Activated naive CD4-positive, alpha-beta T cell treated with anti-CD3 and anti-CD28 coated beads for 36 hours (primary cell): ENCODE measurements at regions of chr20 and their contacts with region 1.

Region 1: GRCh38 chr20:50120897-50121693 is 8.1 kb upstream of the UBE2V1 start:
- DNase-seq: peak; percentile 73
- H3K4me3 Mint-ChIP-seq: no peak overlapping the region
- H3K27ac Mint-ChIP-seq: no peak overlapping the region
- H3K4me1 Mint-ChIP-seq: peaks cover 8% of the 10 kb centered on the region
- H3K27me3 Mint-ChIP-seq: no peaks in the 10 kb centered on the region

Region 2: GRCh38 chr20:49186535-49187329 is 934.4 kb before region 1 on chr20:
- CTCF ChIA-PET with region 1: no interaction called
- intact Hi-C with region 1: no loop called
- DNase-seq: peak; percentile 84
- H3K4me3 Mint-ChIP-seq: peak overlapping the region; percentile 82
- H3K27ac Mint-ChIP-seq: peak overlapping the region; percentile 90
- H3K4me1 Mint-ChIP-seq: peaks cover 49% of the 10 kb centered on the region
- H3K27me3 Mint-ChIP-seq: no peaks in the 10 kb centered on the region

Region 3: DNA sequence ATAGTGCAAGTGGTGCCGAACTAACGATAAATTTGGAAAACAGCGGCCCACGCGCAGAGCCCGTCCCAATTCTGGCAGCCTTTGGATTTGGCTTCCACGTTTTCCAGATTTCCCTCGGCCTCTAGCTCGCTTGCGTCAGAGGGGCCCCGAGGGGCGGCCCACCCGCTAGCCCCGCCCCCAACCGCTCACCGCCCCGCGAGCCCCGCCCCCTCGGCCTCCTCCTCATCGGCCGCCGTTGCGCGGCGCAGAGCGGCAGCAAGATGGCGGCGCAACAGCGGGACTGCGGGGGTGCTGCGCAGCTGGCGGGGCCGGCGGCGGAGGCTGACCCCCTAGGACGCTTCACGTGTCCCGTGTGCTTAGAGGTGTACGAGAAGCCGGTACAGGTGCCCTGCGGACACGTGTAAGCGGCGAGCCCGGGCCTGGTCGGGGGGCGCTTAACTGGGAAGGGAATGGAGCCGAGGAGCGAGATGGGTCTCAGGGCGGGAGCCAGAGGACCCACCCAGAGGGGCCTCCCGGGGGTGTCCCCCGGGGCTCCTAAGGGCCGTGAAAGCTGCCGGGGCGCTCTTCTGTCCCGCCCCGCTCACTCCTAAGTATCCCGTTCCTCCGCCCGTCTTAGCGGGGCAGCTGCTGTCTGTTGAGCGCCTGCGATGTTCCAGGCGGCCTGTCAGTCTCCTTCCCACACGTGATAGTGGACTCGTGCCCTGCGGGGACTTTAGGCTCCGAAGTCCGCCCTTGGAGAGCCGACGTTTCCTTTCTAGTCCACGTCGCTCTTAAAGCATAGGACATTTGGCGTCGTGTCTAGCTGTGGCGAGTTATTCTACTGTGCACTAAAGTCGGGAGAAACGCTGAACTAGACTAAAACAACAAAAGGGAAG is 184.7 kb before region 1 on chr20 and contains the start of gene RNF114:
- CTCF ChIA-PET with region 1: no interaction called
- intact Hi-C with region 1: no loop called
- DNase-seq: peak; percentile 93
- H3K4me3 Mint-ChIP-seq: peak within 1 kb of the TSS; percentile 96
- H3K27ac Mint-ChIP-seq: peak within 1 kb of the TSS; percentile 83
- H3K4me1 Mint-ChIP-seq: peaks cover 46% of the 10 kb centered on the region
- H3K27me3 Mint-ChIP-seq: no peaks in the 10 kb centered on the region
- total RNA-seq, gene RNF114: 72.3 to 76.5 TPM

Region 4: GRCh38 chr20:50058747-50059404 is 62.2 kb before region 1 on chr20:
- CTCF ChIA-PET with region 1: no interaction called
- intact Hi-C with region 1: no loop called
- DNase-seq: no peak
- H3K4me3 Mint-ChIP-seq: no peak overlapping the region
- H3K27ac Mint-ChIP-seq: no peak overlapping the region
- H3K4me1 Mint-ChIP-seq: no peaks in the 10 kb centered on the region
- H3K27me3 Mint-ChIP-seq: peaks cover under 1% of the 10 kb centered on the region

Region 5: DNA sequence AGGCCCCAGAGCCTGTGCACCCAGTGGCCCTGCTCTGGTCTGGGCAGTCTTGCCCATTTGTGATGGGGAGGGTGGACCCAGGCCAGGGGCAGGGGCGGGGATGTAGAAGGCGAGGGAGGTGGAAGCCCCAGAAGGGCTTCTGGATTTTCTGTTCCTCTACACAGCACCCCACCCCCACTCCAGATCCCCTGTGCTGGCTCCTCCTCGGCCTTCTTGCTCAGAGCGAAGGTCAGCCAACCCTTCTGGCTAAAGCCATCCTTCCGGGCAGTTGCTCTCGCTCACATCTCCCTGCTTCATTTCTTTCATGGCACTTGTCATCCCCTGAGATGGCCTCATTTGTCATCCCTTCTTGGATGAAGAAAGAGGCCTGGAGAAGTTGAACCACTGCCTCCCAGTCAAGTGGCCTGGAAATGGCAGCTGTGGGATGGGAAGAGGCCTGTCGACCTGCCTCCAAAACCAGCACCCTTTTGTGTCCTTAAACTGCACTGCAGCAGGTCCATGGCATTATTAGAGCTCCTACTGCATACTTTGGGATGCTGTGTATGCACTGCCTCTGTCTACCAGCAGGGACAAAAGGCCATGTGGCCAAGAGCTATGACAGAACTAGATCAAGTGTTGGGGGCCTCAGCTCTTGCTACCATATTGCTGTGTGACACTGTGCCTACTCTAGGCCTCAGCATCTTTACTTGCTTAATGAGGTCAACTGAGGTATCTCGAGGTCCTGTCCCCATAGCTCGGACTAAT is 12.6 kb after region 1 on chr20:
- CTCF ChIA-PET with region 1: interaction called, 12 read pairs
- intact Hi-C with region 1: no loop called
- DNase-seq: no peak
- H3K4me3 Mint-ChIP-seq: no peak overlapping the region
- H3K27ac Mint-ChIP-seq: no peak overlapping the region
- H3K4me1 Mint-ChIP-seq: peaks cover 15% of the 10 kb centered on the region
- H3K27me3 Mint-ChIP-seq: no peaks in the 10 kb centered on the region

Region 6: GRCh38 chr20:50146732-50147662 is 25.9 kb after region 1 on chr20:
- CTCF ChIA-PET with region 1: interaction called, 77 read pairs
- intact Hi-C with region 1: no loop called
- DNase-seq: peak; percentile 91
- H3K4me3 Mint-ChIP-seq: peak overlapping the region; percentile 74
- H3K27ac Mint-ChIP-seq: peak overlapping the region; percentile 98
- H3K4me1 Mint-ChIP-seq: peaks cover 61% of the 10 kb centered on the region
- H3K27me3 Mint-ChIP-seq: no peaks in the 10 kb centered on the region

Region 7: GRCh38 chr20:50179507-50180016 is 58.5 kb after region 1 on chr20:
- CTCF ChIA-PET with region 1: interaction called, 55 read pairs
- intact Hi-C with region 1: loop called (anchors 2 kb)
- DNase-seq: no peak
- H3K4me3 Mint-ChIP-seq: no peak overlapping the region
- H3K27ac Mint-ChIP-seq: no peak overlapping the region
- H3K4me1 Mint-ChIP-seq: no peaks in the 10 kb centered on the region
- H3K27me3 Mint-ChIP-seq: peaks cover 9% of the 10 kb centered on the region